Posterior vena cava (tissue), 2 donors: ENCODE measurements at regions of chr12 and their contacts with region 1.

Region 1: GRCh38 chr12:28110329-28110728 is 79.9 kb upstream of the CCDC91 start:
- DNase-seq: no peak

Region 2: GRCh38 chr12:29492891-29493290 is 1382.6 kb after region 1 on chr12:
- intact Hi-C with region 1: loop called in 1 of 2 experiments (anchors 10 kb)
- DNase-seq: no peak